ENCODE measurements at regions of chr5 and their contacts with region 1.

Region 1: DNA sequence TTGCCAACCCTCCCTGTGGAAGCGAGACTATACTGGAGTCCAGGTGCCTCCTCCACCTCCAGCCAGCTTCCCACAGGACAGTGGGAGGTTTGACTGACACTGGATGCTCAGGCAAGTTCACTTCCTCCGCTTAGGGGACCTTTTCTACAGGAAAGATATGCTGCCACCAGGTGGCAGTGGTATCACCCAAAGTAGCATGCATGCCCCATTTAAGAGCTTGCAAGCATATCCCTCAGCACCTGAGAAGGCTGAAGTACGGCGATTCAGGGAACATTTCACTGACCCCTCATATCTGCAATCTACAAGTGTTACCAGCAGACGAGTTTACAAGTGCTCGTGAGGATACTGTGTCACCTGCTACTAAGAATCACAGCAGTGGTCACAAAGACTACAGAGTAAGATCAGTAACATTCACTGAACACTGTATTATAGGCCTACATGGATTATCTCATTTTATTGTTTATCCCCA is 75.5 kb downstream of the KLHL3 start:
- DNase-seq: peak; percentile 19 to 51
- ATAC-seq: peak; percentile 84 to 85
- H3K4me3 ChIP-seq: no peak overlapping the region
- H3K27ac ChIP-seq: no peak overlapping the region
- H3K4me1 ChIP-seq: no peaks in the 10 kb centered on the region
- H3K27me3 ChIP-seq: no peaks in the 10 kb centered on the region
- CTCF ChIP-seq: peak; percentile 20 to 80 (median 72)
- POLR2A ChIP-seq: no peak

Region 2: GRCh38 chr5:137636830-137637714 is 23.3 kb before region 1 on chr5:
- in situ Hi-C with region 1: no loop called
- intact Hi-C with region 1: no loop called
- DNase-seq: no peak
- ATAC-seq: no peak
- H3K4me3 ChIP-seq: no peak overlapping the region
- H3K27ac ChIP-seq: no peak overlapping the region
- H3K4me1 ChIP-seq: no peaks in the 10 kb centered on the region
- H3K27me3 ChIP-seq: no peaks in the 10 kb centered on the region
- CTCF ChIP-seq: no peak
- POLR2A ChIP-seq: no peak

Region 3: DNA sequence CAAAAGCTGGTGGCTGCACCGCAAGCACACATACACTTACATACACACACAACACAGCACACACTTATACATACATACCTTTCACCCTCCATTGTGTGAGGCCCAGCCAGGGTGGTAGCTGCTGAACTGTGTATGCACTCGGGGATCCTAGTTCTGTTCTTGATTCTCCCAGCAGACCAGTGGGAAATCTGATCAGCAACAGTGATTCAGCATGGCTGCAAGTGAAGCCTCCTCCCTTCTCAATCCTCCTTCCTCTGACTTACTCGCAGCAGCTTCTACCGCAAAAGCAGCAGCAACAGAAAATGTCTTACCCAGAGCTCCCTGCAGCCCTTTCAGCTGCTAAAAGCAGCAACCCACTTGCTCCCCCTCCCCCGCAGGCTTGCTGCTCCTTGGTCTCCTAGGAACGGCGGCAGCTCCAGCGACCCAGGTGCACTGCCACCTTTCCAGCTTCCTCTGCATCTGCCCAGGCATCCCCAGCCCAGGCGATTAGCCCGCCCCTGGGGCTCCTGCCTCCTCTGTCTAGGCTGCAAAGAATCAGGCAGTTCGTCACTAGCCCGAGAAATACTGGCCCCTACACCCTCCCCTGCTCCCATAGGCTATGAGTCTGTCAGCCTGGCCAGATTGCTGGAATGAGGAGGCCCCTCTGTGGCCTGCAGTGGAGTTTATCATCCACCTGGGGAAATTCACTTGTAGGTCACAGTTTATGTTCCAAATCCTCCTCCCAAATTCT is 75.3 kb after region 1 on chr5 and contains the start of gene KLHL3:
- in situ Hi-C with region 1: loop called in 2 of 4 experiments (anchors 10 kb)
- intact Hi-C with region 1: loop called (anchors 2 kb)
- DNase-seq: no peak
- ATAC-seq: peak in 1 of 2 donors; percentile 64
- H3K4me3 ChIP-seq: peak within 1 kb of the TSS; percentile 17 to 51 (median 40)
- H3K27ac ChIP-seq: peak within 1 kb of the TSS; percentile 30 to 56 (median 38)
- H3K4me1 ChIP-seq: peaks cover 9% of the 10 kb centered on the region in 2 donors
- H3K27me3 ChIP-seq: no peaks in the 10 kb centered on the region
- CTCF ChIP-seq: no peak
- POLR2A ChIP-seq: no peak
- total RNA-seq, gene KLHL3: 0.46 to 4.6 (median 1.7) TPM

Region 4: DNA sequence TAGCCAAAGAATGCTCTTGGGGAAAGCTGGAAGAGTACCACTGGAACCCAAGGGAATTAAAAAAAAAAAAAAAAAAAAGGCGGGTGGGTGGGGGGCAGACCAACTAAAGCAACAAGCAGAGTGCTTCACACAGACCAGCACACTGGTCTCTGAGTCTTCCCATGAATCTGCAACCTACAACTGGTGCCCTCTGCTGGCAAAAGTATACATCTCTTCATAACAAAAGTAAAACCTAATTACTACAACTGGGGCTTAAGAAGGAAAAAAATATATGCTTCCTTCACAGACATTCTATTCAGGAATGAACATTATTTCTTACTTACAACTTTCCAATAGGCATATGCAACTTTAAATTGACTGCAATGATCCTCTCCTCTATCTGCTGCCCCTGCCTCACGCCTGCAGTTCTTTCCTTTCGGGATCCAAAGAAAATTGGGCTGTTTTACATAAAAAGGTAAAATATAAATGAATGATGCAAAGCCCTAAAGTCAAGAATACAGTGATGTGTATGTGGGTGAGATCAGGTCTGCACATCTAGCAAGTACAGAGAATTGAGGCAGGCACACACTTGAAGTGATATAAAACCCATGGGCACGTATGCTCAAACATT is 82.8 kb after region 1 on chr5:
- in situ Hi-C with region 1: loop called in 2 of 4 experiments (anchors 10 kb)
- intact Hi-C with region 1: loop called (anchors 1 kb)
- DNase-seq: peak in 1 of 2 donors; percentile 23
- ATAC-seq: peak; percentile 76 to 86
- H3K4me3 ChIP-seq: no peak overlapping the region
- H3K27ac ChIP-seq: no peak overlapping the region
- H3K4me1 ChIP-seq: peaks cover 3 to 4% of the 10 kb centered on the region in 2 donors
- H3K27me3 ChIP-seq: no peaks in the 10 kb centered on the region
- CTCF ChIP-seq: peak; percentile 41 to 70 (median 56)
- POLR2A ChIP-seq: no peak

Region 5: GRCh38 chr5:137822158-137822764 is 161.9 kb after region 1 on chr5:
- in situ Hi-C with region 1: no loop called
- intact Hi-C with region 1: loop called (anchors 5 kb)
- DNase-seq: peak; percentile 18 to 55
- ATAC-seq: peak; percentile 79 to 90
- H3K4me3 ChIP-seq: no peak overlapping the region
- H3K27ac ChIP-seq: peak overlapping the region; percentile 17 to 54 (median 32)
- H3K4me1 ChIP-seq: peaks cover 8 to 9% of the 10 kb centered on the region in 2 donors
- H3K27me3 ChIP-seq: no peaks in the 10 kb centered on the region
- CTCF ChIP-seq: peak; percentile 32 to 66 (median 53)
- POLR2A ChIP-seq: no peak

Region 6: GRCh38 chr5:138138949-138139780 is 478.8 kb after region 1 on chr5 and contains the start of gene NME5:
- in situ Hi-C with region 1: loop called in 1 of 4 experiments (anchors 25 kb)
- intact Hi-C with region 1: loop called (anchors 10 kb)
- DNase-seq: peak; percentile 20 to 31
- ATAC-seq: peak; percentile 66 to 74
- H3K4me3 ChIP-seq: peak within 1 kb of the TSS; percentile 50 to 57 (median 56)
- H3K27ac ChIP-seq: no peak within 1 kb of the TSS
- H3K4me1 ChIP-seq: peaks cover 0 to 7% of the 10 kb centered on the region in 2 donors
- H3K27me3 ChIP-seq: no peaks in the 10 kb centered on the region
- CTCF ChIP-seq: no peak
- POLR2A ChIP-seq: no peak
- total RNA-seq, gene NME5: 0.51 TPM in 2 of 4 donors, not detected in the others